Right cardiac atrium (tissue), 5 donors: ENCODE measurements at regions of chr10 and their contacts with region 1.

Region 1: DNA sequence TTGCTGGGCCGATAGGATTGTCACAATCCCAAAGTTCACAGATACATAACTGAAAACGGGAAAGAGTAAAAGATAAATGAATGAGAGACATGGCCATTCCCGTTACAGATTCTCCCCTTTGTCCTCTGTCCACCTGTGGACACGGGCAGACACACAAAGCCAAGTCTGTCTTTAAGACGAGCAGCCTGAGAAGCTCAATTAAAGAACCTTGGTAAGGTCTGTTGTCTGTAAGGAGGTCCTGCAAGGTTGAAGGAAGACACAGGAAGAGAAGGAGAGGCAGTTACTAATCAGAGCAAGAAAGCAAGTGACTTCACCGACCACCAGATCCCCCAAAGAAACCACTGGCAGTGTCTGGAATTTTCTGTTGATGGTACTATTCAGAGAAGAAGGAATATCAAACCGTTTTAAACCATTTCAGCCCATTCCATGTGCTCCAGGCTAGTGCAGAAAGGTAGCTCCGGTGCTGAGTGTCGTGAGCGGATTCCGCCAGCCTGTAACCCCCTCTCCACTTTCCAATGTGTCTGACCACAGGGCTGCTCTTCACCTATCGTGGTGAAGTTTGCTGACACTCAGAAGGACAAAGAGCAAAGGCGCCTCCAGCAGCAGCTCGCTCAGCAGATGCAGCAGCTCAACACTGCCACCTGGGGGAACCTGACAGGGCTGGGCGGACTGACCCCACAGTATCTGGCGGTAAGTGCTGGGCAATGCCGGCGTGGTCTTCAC is 252.6 kb downstream of the CELF2 start:
- DNase-seq: peak; percentile 84 to 93 (median 92)
- ATAC-seq: peak; percentile 95 to 96
- H3K4me3 ChIP-seq: no peak overlapping the region
- H3K27ac ChIP-seq: no peak overlapping the region
- H3K4me1 ChIP-seq: peaks cover 3% of the 10 kb centered on the region
- H3K27me3 ChIP-seq: no peaks in the 10 kb centered on the region

Region 2: DNA sequence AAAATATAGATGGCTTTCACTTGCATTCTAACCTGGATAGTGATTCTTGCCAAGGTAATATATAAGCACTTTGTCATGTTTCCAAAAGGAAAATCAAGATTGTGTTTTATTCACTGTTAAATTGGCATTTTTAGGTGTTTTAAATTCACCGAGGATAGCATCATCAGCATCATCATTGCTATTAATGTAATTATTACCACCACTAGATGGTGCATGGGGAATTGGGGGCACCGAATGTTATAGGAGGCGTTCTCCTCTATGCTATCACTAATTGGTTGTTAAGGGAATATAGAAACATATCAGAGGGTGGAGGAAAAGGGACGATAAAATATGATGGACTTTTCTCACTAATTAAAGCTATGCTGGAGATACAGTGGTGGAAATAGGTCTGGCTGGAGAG is 157.1 kb before region 1 on chr10:
- intact Hi-C with region 1: loop called in 1 of 4 experiments (anchors 10 kb)
- DNase-seq: no peak
- ATAC-seq: no peak
- H3K4me3 ChIP-seq: no peak overlapping the region
- H3K27ac ChIP-seq: no peak overlapping the region
- H3K4me1 ChIP-seq: peaks cover 11% of the 10 kb centered on the region
- H3K27me3 ChIP-seq: no peaks in the 10 kb centered on the region

Region 3: DNA sequence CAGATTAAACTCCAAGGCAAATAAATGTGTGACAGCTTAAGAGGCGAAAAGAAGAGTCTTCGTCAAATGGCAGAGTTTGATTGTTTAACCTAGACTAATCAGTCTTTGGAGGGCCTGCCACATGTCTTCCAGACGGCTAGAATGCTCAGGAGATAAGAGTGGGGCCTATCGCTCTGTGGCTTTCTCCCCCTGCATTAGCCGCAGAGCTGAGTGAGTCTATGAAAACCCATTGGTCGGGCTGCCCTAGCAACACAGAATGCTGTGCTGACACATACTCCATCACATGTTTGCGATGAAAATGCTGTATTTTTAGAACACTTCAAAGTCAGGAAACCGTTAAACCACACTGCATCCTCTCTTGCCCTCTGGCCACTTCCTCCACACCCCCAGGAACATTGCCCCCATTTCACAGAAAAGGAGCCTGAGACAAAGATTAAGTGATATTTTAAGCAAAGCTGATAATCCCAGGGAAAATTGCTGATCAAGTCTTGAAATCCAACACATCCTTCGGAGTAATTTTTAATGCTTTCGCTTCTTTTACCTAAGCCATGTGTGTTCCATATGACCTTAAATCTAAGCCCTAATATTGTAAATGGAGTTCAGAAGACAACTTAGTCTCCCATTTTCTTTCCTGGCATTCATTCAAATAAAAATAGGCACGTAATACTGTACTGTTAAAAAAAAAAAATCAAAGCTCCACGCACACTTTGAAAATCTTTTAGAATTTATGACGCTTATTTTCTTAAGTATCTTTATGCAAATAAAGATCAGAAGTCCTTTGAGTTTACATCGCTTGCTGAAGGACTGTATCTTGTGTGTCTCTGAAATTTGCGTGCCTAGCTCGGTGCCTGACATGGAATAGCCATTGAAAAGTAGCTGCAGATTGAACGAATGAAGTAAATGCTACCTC is 91.4 kb before region 1 on chr10:
- intact Hi-C with region 1: loop called in 1 of 4 experiments (anchors 10 kb)
- DNase-seq: peak; percentile 35 to 83 (median 71)
- ATAC-seq: peak; percentile 70 to 80
- H3K4me3 ChIP-seq: no peak overlapping the region
- H3K27ac ChIP-seq: peak overlapping the region; percentile 64
- H3K4me1 ChIP-seq: peaks cover 13% of the 10 kb centered on the region
- H3K27me3 ChIP-seq: no peaks in the 10 kb centered on the region